ENCODE measurements at regions of chr2 and their contacts with region 1.

Region 1: GRCh38 chr2:195498176-195498575 is 158.8 kb upstream of the SLC39A10 start:
- DNase-seq: peak; percentile 61 to 65 (median 63)
- H3K4me3 ChIP-seq: no peak overlapping the region
- H3K27ac ChIP-seq: no peak overlapping the region
- H3K4me1 ChIP-seq: peaks cover 0 to 10% (median 3%) of the 10 kb centered on the region in 4 experiments
- H3K27me3 ChIP-seq: no peaks in the 10 kb centered on the region

Region 2: DNA sequence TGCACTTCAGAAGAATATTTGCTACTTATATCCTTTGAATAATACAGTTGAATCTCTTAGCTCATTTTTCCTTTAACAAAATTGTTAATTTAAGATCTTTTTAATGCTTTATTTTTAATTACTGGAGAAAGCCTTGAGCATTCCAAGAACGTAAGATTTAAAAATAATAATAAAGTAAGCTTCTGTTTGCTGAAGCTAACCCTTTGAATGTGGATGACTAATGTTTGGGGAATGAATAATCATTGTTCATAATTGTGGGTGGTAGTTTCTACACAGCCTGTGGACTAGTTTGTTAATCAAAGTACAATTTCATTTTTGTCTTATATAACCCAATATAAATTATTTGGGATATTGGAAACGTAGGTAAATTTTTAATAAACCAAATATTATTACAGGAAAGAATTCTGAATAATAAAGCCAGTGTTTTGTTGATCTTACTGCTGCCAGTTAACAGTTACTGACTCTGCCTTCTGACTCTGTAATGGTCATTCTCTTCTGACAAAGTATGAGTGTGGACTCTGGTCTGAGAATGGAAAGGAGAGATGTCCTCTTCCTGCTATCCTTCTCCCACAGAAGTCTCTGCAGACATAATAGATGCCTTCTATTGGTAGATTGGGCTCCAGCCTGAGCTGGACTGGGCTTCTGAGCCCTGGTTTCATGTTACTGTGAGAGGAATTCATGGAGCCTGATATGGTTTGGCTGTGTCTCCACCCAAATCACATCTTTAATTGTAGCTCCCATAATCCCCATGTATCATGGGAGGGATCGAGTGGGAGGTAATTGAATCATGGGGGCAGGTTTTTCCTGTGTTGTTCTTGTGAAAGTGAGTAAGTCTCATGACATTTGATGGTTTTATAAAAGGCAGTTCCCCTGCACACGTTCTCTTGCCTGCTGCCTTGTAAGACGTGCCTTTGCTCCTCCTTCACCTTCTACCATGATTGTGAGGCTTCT is 133.9 kb before region 1 on chr2:
- CTCF ChIA-PET with region 1: no interaction called
- POLR2A ChIA-PET with region 1: no interaction called
- DNase-seq: no peak
- H3K4me3 ChIP-seq: no peak overlapping the region
- H3K27ac ChIP-seq: no peak overlapping the region
- H3K4me1 ChIP-seq: no peaks in the 10 kb centered on the region
- H3K27me3 ChIP-seq: no peaks in the 10 kb centered on the region

Region 3: DNA sequence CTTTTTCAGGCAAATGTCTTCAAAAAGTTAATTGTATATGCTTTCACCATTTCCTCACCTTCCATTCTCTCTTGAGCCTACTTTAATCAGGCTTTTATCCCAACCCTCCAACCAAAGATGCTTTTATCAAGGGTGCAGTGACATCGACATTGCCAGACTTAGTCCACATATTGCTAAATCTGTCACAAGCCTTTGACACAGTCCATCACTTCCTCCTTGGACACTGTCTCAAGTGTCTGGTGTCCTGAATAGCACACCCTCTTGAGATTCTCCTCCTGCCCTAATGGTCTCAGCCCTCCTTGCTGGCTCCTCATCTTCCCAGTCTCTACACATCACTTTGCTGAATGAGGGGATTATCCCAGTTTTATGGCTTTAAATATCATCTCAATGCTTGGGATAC is 11.4 kb after region 1 on chr2:
- CTCF ChIA-PET with region 1: interaction called, 13 read pairs
- POLR2A ChIA-PET with region 1: no interaction called
- DNase-seq: no peak
- H3K4me3 ChIP-seq: no peak overlapping the region
- H3K27ac ChIP-seq: no peak overlapping the region
- H3K4me1 ChIP-seq: peaks cover 0 to 8% (median 3%) of the 10 kb centered on the region in 4 experiments
- H3K27me3 ChIP-seq: no peaks in the 10 kb centered on the region